ENCODE measurements at regions of chr5 and their contacts with region 1.

Region 1: DNA sequence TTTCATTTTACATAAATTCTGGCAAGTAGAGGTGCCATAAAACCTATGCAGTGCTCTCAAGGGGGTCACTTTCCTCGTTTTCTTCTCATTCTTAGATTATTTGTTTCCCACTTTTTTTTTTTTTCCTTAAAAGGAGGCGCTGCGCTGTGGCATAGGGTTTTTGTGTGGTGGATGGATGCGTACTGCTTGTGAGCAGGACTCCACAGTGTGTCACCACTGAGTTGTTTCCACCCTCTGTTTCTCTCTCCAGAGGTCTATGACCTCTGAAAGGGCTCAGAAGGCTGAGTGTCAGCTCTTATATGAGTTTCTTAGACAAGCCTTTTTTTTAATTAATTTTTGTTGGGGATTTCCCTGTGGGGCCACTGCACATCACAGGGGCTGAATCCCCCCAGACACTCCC is 13.6 kb upstream of the CLTB start:
- DNase-seq: no peak
- ATAC-seq: peak; percentile 95
- H3K4me3 ChIP-seq: no peak overlapping the region
- H3K27ac ChIP-seq: peak overlapping the region; percentile 76
- H3K4me1 ChIP-seq: peaks cover 10% of the 10 kb centered on the region
- H3K27me3 ChIP-seq: no peaks in the 10 kb centered on the region
- CTCF ChIP-seq: peak; percentile 72

Region 2: GRCh38 chr5:176548967-176549444 is 119.0 kb after region 1 on chr5 and contains the start of gene CDHR2:
- CTCF ChIA-PET with region 1: interaction called, 15 read pairs
- POLR2A ChIA-PET with region 1: no interaction called
- in situ Hi-C with region 1: no loop called
- intact Hi-C with region 1: no loop called
- DNase-seq: no peak
- ATAC-seq: no peak
- H3K4me3 ChIP-seq: no peak within 1 kb of the TSS
- H3K27ac ChIP-seq: peak within 1 kb of the TSS; percentile 59
- H3K4me1 ChIP-seq: peaks cover 25% of the 10 kb centered on the region
- H3K27me3 ChIP-seq: no peaks in the 10 kb centered on the region
- CTCF ChIP-seq: no peak
- total RNA-seq, gene CDHR2: 0.72 TPM

Region 3: DNA sequence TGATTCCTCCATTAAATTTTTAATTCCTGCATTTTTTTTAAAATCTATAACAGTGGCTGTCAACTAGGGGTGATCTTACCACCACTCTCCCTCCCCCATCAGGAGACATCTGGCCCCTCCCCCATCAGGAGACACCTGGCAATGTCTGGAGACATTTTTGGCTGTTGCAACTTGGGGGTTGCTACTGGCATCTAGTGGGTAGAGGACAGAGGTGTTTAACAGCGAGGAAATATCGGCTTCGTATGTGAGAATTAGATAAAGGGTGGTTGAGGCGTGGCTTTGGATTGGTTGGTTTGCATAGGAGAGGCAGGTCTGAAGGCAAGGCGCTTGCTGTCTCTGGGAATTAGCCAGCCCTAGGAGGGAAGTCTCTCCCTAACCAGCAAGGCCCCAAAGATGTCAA is 129.7 kb after region 1 on chr5:
- CTCF ChIA-PET with region 1: no interaction called
- POLR2A ChIA-PET with region 1: no interaction called
- in situ Hi-C with region 1: no loop called
- intact Hi-C with region 1: no loop called
- DNase-seq: no peak
- ATAC-seq: no peak
- H3K4me3 ChIP-seq: no peak overlapping the region
- H3K27ac ChIP-seq: no peak overlapping the region
- H3K4me1 ChIP-seq: no peaks in the 10 kb centered on the region
- H3K27me3 ChIP-seq: no peaks in the 10 kb centered on the region
- CTCF ChIP-seq: no peak

Measured in Panc1 (cell line).